Aorta (tissue), 5 donors: ENCODE measurements at regions of chr18 and their contacts with region 1.

Region 1: GRCh38 chr18:58438161-58438957 is 190.5 kb downstream of the ALPK2 start:
- DNase-seq: no peak
- ATAC-seq: peak; percentile 48
- H3K4me3 ChIP-seq: no peak overlapping the region
- H3K27ac ChIP-seq: no peak overlapping the region
- H3K4me1 ChIP-seq: no peaks in the 10 kb centered on the region
- H3K27me3 ChIP-seq: no peaks in the 10 kb centered on the region

Region 2: GRCh38 chr18:58378411-58379379 is 59.7 kb before region 1 on chr18:
- intact Hi-C with region 1: loop called in 1 of 2 experiments (anchors 10 kb)
- DNase-seq: no peak
- ATAC-seq: no peak
- H3K4me3 ChIP-seq: no peak overlapping the region
- H3K27ac ChIP-seq: no peak overlapping the region
- H3K4me1 ChIP-seq: no peaks in the 10 kb centered on the region
- H3K27me3 ChIP-seq: no peaks in the 10 kb centered on the region

Region 3: DNA sequence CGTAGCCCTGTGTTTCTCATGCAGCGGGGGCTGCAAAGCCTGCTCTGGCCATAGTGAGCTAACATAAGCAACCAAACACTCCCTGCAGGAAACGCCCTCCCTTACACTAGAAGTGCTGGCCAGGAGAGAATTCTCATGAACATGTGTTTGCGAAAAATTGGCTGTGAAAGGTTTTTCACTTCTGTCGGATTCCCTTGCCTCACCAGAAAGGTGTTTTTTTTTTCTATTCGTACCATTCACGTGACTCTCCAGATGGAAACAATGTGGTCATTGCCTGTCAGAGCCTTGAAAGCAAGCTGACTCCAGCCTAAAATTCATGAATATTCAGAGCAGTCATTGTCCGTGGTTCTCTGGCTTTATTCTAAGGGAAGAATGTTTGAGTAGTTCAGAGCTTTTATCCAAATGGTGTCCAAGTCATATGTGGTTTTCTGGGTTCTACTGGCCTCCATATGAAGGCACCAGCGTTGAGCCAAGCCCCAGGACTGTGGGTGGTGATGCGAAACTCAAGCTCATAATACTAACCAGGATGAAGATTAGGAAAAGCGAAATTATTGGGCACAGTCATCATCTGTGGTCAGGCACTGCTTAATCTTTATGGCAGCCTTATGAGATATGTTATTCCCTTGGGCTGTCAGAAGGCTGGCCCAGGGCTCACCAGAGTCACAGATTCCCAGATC is 45.9 kb before region 1 on chr18:
- intact Hi-C with region 1: no loop called
- DNase-seq: no peak
- ATAC-seq: peak; percentile 64
- H3K4me3 ChIP-seq: no peak overlapping the region
- H3K27ac ChIP-seq: no peak overlapping the region
- H3K4me1 ChIP-seq: no peaks in the 10 kb centered on the region
- H3K27me3 ChIP-seq: no peaks in the 10 kb centered on the region

Region 4: DNA sequence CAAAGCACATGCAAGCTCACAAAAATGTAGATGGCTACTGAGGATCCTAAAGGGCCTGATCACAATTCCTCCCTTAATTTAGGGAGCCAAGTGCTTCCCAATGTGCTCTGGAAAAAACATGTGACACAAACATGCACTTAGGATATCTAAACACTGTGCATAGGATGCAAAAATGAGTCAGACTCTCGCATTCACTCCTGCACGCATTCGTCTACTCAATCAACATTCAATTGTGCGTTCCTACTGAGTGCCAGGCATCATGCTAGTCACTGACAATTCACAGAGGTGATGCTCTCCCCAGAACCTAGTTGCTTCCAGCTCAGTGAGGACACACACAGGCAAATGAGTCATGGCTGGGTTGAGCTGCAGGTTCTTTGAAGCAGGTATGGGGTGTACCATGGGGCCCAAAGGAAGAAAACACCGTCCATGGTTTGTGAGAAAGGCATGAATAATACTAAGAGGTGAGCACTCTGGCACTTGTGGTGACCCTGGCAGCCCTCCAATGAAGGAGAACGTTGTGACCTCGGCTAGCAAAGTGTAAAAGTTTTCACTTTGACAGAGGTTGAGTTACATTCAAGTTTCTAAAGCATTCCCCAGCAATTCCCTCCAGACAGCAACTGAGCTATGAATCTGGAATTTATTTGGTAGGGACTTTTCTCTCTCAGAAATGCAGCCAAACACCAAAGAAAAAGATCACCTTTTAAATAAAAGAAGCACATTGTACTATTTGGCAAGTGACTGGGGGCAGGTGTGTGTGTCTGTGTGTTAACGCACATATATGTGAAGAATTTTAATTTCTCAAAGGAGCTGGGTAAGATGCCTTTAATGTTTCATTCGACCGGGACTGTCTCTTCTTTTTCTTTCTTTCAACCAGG is 17.2 kb after region 1 on chr18:
- intact Hi-C with region 1: no loop called
- DNase-seq: no peak
- ATAC-seq: no peak
- H3K4me3 ChIP-seq: no peak overlapping the region
- H3K27ac ChIP-seq: no peak overlapping the region
- H3K4me1 ChIP-seq: no peaks in the 10 kb centered on the region
- H3K27me3 ChIP-seq: no peaks in the 10 kb centered on the region

Region 5: GRCh38 chr18:58466636-58467205 is 28.4 kb after region 1 on chr18:
- intact Hi-C with region 1: no loop called
- DNase-seq: no peak
- ATAC-seq: no peak
- H3K4me3 ChIP-seq: no peak overlapping the region
- H3K27ac ChIP-seq: no peak overlapping the region
- H3K4me1 ChIP-seq: no peaks in the 10 kb centered on the region
- H3K27me3 ChIP-seq: no peaks in the 10 kb centered on the region